Ovary (tissue), 10 donors: ENCODE measurements at regions of chr3 and their contacts with region 1.

Region 1: DNA sequence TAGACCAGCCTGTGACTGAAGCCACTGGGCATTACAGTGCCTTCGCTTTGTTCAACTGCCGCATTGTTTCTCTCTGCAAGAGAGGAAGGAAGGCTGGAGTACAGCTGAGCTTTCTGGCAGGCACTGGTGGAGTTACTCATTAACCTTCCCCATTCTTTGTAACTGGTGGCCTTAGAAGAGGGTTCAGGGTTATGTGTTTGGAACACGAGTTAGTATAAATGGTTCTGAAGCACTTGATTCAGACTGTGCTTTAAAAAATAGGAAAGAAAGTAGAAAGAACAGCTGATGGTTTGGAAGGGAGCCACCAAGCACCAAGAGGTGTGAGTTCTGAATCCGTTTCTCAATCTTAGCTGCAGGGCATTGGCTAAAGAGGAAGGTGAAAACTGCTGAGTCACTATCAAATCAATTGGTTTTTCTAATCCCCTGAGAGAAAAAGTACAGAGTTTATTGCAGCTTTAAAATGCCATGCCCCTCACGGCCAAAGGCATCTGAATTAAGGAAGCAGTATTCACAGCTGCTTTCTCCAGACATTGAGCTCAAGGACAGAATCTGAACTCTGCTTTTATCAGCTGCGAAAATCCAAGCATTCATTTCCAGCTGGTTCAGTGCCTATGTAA is 3.6 kb downstream of the HGD start:
- DNase-seq: peak; percentile 57 to 63 (median 60)
- H3K4me3 ChIP-seq: no peak overlapping the region
- H3K27ac ChIP-seq: peak overlapping the region in 1 of 2 donors; percentile 46
- H3K4me1 ChIP-seq: no peaks in the 10 kb centered on the region
- H3K27me3 ChIP-seq: no peaks in the 10 kb centered on the region
- CTCF ChIP-seq: no peak
- EP300 ChIP-seq: no peak
- POLR2A ChIP-seq: no peak

Region 2: DNA sequence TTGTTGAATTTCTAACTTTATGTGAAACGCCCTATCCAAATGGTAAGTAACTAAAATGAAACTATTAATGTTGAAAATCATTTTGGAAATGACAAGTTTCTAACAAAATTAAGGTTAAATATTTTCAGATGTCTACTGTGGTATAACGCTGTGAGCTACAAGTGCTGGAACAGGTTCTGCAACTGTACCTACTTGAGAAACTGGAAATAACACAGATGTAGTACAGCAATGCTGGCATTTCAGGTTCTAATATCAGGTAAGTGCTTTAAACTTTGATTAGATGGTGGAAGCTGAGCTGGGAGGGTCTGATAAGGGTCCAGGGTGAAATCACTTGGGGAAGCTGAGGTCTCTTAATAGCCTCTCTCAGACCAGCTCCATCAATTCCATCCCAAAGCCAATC is 544.7 kb after region 1 on chr3:
- intact Hi-C with region 1: loop called in 1 of 4 experiments (anchors 5 kb)
- DNase-seq: no peak
- H3K4me3 ChIP-seq: no peak overlapping the region
- H3K27ac ChIP-seq: no peak overlapping the region
- H3K4me1 ChIP-seq: no peaks in the 10 kb centered on the region
- H3K27me3 ChIP-seq: no peaks in the 10 kb centered on the region
- CTCF ChIP-seq: no peak
- EP300 ChIP-seq: no peak
- POLR2A ChIP-seq: no peak